Left colon (tissue), 2 donors: ENCODE measurements at regions of chr1 and their contacts with region 1.

Region 1: GRCh38 chr1:101288491-101288944 is 51.7 kb downstream of the S1PR1 start:
- DNase-seq: peak; percentile 42 to 57
- ATAC-seq: peak; percentile 95

Region 2: GRCh38 chr1:100921109-100921706 is 367.3 kb before region 1 on chr1:
- intact Hi-C with region 1: loop called (anchors 2 to 10 kb)
- DNase-seq: no peak
- ATAC-seq: no peak

Region 3: DNA sequence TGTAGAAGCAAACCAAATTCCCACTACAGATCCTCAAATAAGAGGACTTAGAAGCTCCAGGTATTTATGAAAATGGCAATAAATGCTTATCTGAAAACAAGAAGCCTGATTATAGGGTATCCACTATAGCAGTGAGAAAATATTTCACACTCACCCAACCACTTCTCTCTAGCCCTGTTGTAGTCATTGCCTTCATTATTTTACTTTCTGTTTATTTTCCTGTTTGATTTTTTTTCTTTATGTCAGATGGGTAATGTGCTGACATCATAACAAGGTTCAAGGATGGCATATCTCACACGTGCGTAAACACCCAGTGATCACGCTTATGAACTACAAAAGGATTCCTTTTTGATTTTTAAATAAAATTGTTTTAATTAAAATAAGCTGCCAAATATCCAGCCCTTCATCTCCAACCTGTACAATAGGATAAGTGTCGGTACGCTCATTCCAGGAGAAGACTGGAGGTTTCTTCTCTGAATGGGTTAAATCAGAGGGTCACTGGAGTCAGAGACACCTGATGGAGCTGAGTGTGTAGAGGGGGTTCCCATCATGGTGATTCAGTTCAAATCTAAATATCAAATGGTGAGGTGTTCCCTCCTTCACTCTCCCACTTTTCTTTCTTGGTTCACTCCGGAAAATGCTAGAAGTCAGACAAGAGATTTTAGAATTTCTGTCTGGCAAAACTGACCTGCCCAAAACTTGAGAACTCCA is 59.9 kb before region 1 on chr1:
- intact Hi-C with region 1: no loop called
- DNase-seq: no peak
- ATAC-seq: no peak